Cardiac septum (tissue), 1 donor: ENCODE measurements at regions of chr3 and their contacts with region 1.

Region 1: DNA sequence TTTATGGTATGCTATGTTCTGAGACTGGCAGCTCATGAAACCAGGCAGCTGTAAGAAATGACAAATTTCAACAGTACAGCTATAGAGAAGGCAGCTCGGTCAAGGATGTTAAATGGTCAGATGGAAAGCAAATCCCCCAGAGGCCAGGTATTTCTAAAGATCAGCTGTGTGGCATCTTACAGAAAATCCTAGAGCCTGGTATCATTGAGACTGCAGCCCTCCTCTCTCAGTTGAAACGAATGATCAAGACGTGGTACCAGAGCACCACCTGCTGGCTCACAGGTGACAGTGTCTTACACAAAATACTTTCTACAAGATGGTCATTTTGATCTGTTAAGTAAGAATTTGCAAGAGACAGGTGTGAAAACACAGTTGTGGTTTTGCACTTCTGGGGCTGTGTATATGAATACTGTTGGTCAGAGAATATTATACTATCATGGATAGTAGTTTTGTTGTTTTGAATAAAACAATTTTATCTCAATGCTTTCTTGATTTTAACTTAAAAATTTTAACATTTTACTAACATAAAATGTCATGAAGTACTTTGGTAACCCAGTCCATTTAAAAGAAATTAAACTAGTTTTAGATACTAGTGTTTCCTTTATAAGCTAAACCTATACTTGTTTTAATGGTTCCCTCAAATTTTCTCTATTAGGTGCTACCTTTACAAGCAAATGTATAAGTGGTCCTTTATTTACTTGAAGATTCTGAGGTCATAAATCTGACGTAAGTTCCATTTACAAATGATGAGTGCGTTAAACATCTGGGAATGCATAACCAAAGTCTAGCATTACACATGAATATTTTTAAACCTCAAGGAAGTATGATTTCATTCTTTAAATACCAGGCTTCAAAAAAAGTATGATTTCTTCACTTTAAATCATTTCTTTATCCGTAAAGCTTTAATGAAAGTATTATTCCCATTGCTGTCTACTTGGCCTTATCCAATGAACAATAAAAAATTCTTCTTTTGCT is 121.8 kb downstream of the PDZRN3 start:
- DNase-seq: no peak

Region 2: GRCh38 chr3:73100741-73101559 is 401.9 kb before region 1 on chr3:
- intact Hi-C with region 1: loop called (anchors 1 kb)
- DNase-seq: peak; percentile 86

Region 3: GRCh38 chr3:73459711-73460110 is 43.2 kb before region 1 on chr3:
- intact Hi-C with region 1: loop called (anchors 5 kb)
- DNase-seq: no peak

Region 4: GRCh38 chr3:73827725-73828211 is 324.9 kb after region 1 on chr3:
- intact Hi-C with region 1: no loop called
- DNase-seq: no peak